CD4-positive, alpha-beta memory T cell (primary cell): ENCODE measurements at regions of chr2 and their contacts with region 1.

Region 1: DNA sequence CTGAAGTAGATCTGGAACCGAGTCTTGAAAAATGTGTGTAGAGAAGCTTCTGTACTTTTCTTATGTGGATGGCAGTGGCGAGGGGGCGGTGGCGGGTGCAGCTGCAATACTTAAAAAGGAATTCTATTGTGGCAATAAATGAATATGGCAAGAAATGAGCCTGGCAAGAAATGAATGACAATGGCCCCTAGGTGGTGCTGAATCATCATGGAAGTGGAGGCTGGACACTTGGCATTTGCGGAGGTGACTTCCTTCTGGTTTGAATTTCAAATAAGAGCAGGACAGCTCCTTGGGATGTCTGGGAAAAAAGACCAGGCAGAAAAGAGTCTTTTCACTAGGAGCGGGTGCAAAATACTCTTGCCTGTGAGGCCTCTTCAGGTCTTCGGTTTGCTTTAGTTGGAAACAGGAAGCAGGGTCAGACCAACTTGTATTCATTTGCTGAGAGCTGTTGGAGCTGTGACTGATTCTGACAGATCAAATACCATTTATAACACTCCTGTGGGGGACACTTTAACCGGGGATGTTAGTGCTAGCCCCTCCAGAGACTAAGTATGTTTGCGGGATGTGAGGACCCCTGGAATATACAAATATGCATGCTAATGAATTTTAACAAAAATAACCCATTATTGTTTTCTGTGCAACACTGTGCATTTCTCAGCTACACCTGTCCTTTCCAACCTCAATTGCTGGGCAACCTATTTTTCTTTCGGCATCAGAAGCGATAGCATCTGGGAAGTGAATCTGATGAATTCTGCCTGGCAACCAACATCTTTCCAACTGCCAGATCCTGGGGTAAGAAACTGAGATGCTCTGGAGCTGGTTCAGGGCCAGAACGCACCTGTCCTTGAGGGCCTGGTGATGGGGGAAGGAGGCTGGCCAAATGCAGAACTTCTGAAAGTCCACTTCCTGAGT is 35.4 kb downstream of the FASTKD2 start:
- DNase-seq: peak in 4 of 5 donors; percentile 37 to 41 (median 39)
- H3K4me3 ChIP-seq: no peak overlapping the region
- H3K4me3 Mint-ChIP-seq: peak overlapping the region; percentile 53 to 72 (median 63)
- H3K27ac ChIP-seq: no peak overlapping the region
- H3K27ac Mint-ChIP-seq: peak overlapping the region in 3 of 7 donors; percentile 22 to 67 (median 41)
- H3K4me1 ChIP-seq: peaks cover 3% of the 10 kb centered on the region
- H3K4me1 Mint-ChIP-seq: peaks cover 7 to 15% (median 9%) of the 10 kb centered on the region in 4 donors
- H3K27me3 ChIP-seq: no peaks in the 10 kb centered on the region
- H3K27me3 Mint-ChIP-seq: no peaks in the 10 kb centered on the region

Region 2: DNA sequence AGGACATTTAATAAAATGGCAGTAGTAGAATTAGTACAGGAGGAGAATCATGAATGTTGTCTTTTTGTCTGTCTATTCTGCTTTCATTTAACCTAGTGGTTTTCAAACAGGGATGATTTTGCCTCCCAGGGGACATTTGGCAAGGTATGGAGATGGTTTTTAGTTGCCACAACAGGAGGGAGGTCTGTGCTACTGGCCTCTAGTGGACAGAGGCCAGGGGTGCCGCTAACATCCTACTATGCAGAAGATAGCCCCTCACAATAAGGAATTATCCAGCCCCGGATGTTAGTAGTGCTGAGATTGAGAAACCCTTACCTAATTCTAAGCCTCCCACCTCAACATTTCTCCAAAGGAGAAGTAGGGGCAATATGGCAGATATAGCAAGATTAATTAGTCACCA is 17.0 kb before region 1 on chr2:
- CTCF ChIA-PET with region 1: interaction called, 21 read pairs
- POLR2A ChIA-PET with region 1: no interaction called
- intact Hi-C with region 1: no loop called
- DNase-seq: no peak
- H3K4me3 ChIP-seq: no peak overlapping the region
- H3K4me3 Mint-ChIP-seq: no peak overlapping the region
- H3K27ac ChIP-seq: no peak overlapping the region
- H3K27ac Mint-ChIP-seq: peak overlapping the region in 1 of 7 donors; percentile 17
- H3K4me1 ChIP-seq: no peaks in the 10 kb centered on the region
- H3K4me1 Mint-ChIP-seq: peaks cover 5 to 18% (median 15%) of the 10 kb centered on the region in 4 donors
- H3K27me3 ChIP-seq: no peaks in the 10 kb centered on the region
- H3K27me3 Mint-ChIP-seq: no peaks in the 10 kb centered on the region

Region 3: DNA sequence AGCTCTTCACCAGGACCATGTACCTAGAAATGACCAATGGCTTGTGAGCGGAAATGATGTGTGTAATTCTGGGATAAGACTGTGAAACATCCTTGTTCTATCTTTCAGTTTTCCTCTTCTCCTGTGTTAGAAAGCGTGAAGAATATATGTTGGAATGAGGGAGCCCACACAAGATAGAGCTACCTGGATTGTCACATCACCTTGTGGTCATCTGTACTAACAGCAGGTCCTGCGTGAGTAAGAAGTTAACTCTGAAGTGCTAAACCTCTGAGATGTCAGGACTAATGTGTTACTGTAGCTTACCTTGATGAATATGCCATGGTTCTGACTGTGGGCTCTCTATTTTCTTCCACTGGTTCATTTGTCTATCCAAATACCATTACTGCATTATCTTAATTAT is 40.2 kb after region 1 on chr2:
- CTCF ChIA-PET with region 1: no interaction called
- POLR2A ChIA-PET with region 1: no interaction called
- intact Hi-C with region 1: no loop called
- DNase-seq: no peak
- H3K4me3 ChIP-seq: no peak overlapping the region
- H3K4me3 Mint-ChIP-seq: no peak overlapping the region
- H3K27ac ChIP-seq: no peak overlapping the region
- H3K27ac Mint-ChIP-seq: no peak overlapping the region
- H3K4me1 ChIP-seq: no peaks in the 10 kb centered on the region
- H3K4me1 Mint-ChIP-seq: no peaks in the 10 kb centered on the region
- H3K27me3 ChIP-seq: no peaks in the 10 kb centered on the region
- H3K27me3 Mint-ChIP-seq: no peaks in the 10 kb centered on the region

Region 4: DNA sequence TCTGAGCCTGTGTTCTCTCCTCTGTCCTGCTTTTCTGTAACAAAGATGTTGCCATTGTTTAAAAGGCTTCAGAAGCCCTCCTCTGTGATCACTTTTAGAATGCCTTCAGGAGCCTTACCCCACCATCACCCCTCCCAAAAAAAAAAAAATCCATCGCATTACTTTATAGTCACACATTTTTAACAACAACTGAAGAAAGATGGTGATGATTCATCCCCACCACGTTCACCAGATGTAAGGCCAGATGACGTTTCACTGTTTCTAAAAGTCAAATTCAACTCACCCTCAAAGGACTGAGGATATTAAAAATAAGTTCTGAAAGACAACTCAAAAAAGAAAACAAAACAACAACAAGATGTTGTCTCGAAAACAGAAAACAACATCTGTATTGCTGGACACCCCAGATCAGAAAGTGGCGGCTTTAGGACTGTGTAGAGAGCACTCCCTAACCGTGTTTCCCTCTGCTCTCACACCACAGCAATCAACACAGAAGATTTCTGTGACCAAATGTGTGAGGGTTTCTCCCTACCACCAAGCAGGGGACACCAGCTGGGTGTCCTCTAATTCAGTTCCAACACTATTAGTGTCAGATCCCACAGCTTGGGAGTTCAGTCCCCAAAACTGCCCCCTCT is 667.1 kb after region 1 on chr2:
- CTCF ChIA-PET with region 1: interaction called, 44 read pairs
- POLR2A ChIA-PET with region 1: no interaction called
- intact Hi-C with region 1: no loop called
- DNase-seq: no peak
- H3K4me3 ChIP-seq: no peak overlapping the region
- H3K4me3 Mint-ChIP-seq: no peak overlapping the region
- H3K27ac ChIP-seq: no peak overlapping the region
- H3K27ac Mint-ChIP-seq: peak overlapping the region in 1 of 7 donors; percentile 0
- H3K4me1 ChIP-seq: no peaks in the 10 kb centered on the region
- H3K4me1 Mint-ChIP-seq: peaks cover 0 to 4% (median 1%) of the 10 kb centered on the region in 4 donors
- H3K27me3 ChIP-seq: no peaks in the 10 kb centered on the region
- H3K27me3 Mint-ChIP-seq: peaks cover 0 to 1% of the 10 kb centered on the region in 2 donors

Region 5: DNA sequence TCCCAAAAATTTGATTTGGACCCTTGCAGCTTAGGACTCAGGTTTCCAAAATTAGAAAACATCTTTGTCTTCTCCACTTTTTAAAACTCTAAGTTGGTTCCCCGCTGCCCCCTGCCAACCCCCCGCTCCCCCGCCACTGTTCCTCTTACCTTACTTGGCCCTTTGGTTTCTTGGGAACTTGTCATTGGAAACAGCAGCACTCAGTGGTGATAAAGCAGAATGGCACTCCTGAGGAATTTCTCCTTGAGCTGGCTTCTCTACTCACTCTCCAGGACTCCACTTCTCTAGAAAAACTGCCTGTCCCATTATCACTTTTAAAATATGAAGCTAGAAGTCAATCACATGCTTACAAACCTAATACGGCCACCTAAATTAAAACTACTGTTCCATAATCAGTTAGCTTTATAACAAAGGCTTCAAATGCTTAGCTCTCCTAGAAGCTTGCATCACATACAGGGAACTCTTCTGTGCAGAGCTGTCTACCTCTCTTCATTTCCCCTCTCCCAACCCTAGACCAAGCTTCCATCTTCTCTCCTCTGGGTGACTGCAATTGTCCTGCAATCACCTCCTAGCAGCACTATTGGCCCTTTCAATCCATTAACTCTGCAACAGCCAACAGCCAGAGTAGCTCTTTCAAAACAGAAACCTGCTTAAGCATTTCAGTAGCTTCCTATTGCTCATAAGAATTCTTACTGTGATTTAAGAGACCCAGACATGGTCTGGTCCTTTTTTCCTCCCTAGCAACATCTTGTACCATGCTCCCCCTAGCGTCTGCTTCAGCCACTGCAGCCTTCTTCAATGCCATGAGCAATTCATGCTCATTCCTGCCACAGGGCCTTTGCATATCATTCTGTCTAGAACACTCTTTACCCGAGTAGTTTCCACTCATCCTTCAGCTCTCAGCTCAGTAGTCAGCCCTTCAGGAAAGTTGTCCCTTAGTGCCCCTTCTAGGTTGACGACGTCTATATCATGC is 1239.7 kb after region 1 on chr2:
- CTCF ChIA-PET with region 1: interaction called, 4 read pairs
- POLR2A ChIA-PET with region 1: interaction called, 3 read pairs
- intact Hi-C with region 1: loop called (anchors 2 kb)
- DNase-seq: peak; percentile 37 to 58 (median 55)
- H3K4me3 ChIP-seq: no peak overlapping the region
- H3K4me3 Mint-ChIP-seq: no peak overlapping the region
- H3K27ac ChIP-seq: no peak overlapping the region
- H3K27ac Mint-ChIP-seq: peak overlapping the region in 3 of 7 donors; percentile 31 to 42 (median 42)
- H3K4me1 ChIP-seq: no peaks in the 10 kb centered on the region
- H3K4me1 Mint-ChIP-seq: no peaks in the 10 kb centered on the region
- H3K27me3 ChIP-seq: no peaks in the 10 kb centered on the region
- H3K27me3 Mint-ChIP-seq: peaks cover 0 to 2% of the 10 kb centered on the region in 2 donors